Activated B cell treated with CpG ODN at 0.5 μM for 24 hours (primary cell): ENCODE measurements at regions of chr2 and their contacts with region 1.

Region 1: GRCh38 chr2:177263451-177264208 is 897 bp downstream of the NFE2L2 start:
- DNase-seq: peak; percentile 97
- ATAC-seq: peak; percentile 53
- H3K4me3 Mint-ChIP-seq: peak overlapping the region; percentile 97
- H3K27ac Mint-ChIP-seq: peak overlapping the region; percentile 100
- H3K4me1 Mint-ChIP-seq: peaks cover 59% of the 10 kb centered on the region
- H3K27me3 Mint-ChIP-seq: no peaks in the 10 kb centered on the region
- CTCF ChIP-seq: no peak

Region 2: GRCh38 chr2:177221534-177221933 is 42.1 kb before region 1 on chr2:
- CTCF ChIA-PET with region 1: interaction called, 6 read pairs
- POLR2A ChIA-PET with region 1: interaction called, 18 read pairs
- intact Hi-C with region 1: loop called (anchors 5 kb)
- DNase-seq: no peak
- ATAC-seq: no peak
- H3K4me3 Mint-ChIP-seq: no peak overlapping the region
- H3K27ac Mint-ChIP-seq: no peak overlapping the region
- H3K4me1 Mint-ChIP-seq: peaks cover 28% of the 10 kb centered on the region
- H3K27me3 Mint-ChIP-seq: no peaks in the 10 kb centered on the region
- CTCF ChIP-seq: no peak

Region 3: GRCh38 chr2:177275041-177276020 is 11.7 kb after region 1 on chr2:
- CTCF ChIA-PET with region 1: interaction called, 22 read pairs
- POLR2A ChIA-PET with region 1: interaction called, 100 read pairs
- intact Hi-C with region 1: loop called (anchors 2 kb)
- DNase-seq: no peak
- ATAC-seq: no peak
- H3K4me3 Mint-ChIP-seq: no peak overlapping the region
- H3K27ac Mint-ChIP-seq: no peak overlapping the region
- H3K4me1 Mint-ChIP-seq: peaks cover 4% of the 10 kb centered on the region
- H3K27me3 Mint-ChIP-seq: no peaks in the 10 kb centered on the region
- CTCF ChIP-seq: no peak

Region 4: DNA sequence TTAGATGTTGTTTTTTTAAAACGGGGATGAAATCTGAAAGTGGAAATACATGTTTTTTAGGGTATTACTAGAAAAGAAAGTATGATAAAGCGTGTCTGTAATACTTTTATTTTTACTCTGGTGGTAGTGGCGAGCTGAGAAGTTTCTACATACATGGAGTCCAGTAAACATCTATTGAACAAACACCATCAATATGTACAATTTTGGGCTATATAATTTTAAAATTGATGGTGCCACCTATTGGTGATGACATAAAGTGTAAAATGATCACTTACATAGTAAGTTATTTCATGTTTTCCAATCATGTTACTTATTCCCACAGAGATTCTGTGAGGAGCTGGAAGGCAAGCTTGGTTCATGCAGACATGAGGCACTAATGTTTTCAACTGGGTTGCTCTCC is 32.4 kb after region 1 on chr2:
- CTCF ChIA-PET with region 1: interaction called, 41 read pairs
- POLR2A ChIA-PET with region 1: interaction called, 43 read pairs
- intact Hi-C with region 1: loop called (anchors 1 kb)
- DNase-seq: no peak
- ATAC-seq: peak; percentile 57
- H3K4me3 Mint-ChIP-seq: no peak overlapping the region
- H3K27ac Mint-ChIP-seq: peak overlapping the region; percentile 8
- H3K4me1 Mint-ChIP-seq: peaks cover 3% of the 10 kb centered on the region
- H3K27me3 Mint-ChIP-seq: no peaks in the 10 kb centered on the region
- CTCF ChIP-seq: no peak

Region 5: DNA sequence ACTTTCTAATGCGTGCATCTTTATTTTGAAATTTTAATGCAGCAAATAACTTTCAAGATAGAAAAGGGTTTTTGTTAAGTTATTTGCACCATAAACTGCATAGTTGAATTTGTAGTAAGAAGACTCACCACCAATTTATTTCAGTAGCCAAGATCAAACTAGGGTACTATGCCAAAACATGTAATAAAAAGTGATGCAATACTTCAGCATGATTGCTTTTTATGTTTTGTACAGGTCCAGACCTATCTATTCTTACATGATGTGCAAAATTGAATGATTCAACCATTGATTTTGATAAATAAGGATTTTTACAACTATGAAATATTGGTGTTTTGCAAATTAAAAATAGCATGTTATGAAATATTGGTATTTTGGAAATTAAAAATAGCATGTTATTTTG is 155.6 kb after region 1 on chr2:
- CTCF ChIA-PET with region 1: interaction called, 11 read pairs
- POLR2A ChIA-PET with region 1: interaction called, 8 read pairs
- intact Hi-C with region 1: loop called (anchors 1 kb)
- DNase-seq: no peak
- ATAC-seq: no peak
- H3K4me3 Mint-ChIP-seq: no peak overlapping the region
- H3K27ac Mint-ChIP-seq: no peak overlapping the region
- H3K4me1 Mint-ChIP-seq: peaks cover 5% of the 10 kb centered on the region
- H3K27me3 Mint-ChIP-seq: no peaks in the 10 kb centered on the region
- CTCF ChIP-seq: no peak

Region 6: GRCh38 chr2:177724398-177725287 is 461.0 kb after region 1 on chr2:
- CTCF ChIA-PET with region 1: interaction called, 3 read pairs
- POLR2A ChIA-PET with region 1: no interaction called
- intact Hi-C with region 1: loop called (anchors 1 kb)
- DNase-seq: no peak
- ATAC-seq: peak; percentile 60
- H3K4me3 Mint-ChIP-seq: no peak overlapping the region
- H3K27ac Mint-ChIP-seq: no peak overlapping the region
- H3K4me1 Mint-ChIP-seq: no peaks in the 10 kb centered on the region
- H3K27me3 Mint-ChIP-seq: peaks cover 14% of the 10 kb centered on the region
- CTCF ChIP-seq: peak; percentile 45